Body of pancreas (tissue), 4 donors: ENCODE measurements at regions of chr10 and their contacts with region 1.

Region 1: GRCh38 chr10:69786791-69787190 is 14.9 kb upstream of the COL13A1 start:
- DNase-seq: no peak
- ATAC-seq: no peak
- H3K4me3 ChIP-seq: no peak overlapping the region
- H3K27ac ChIP-seq: no peak overlapping the region
- H3K4me1 ChIP-seq: no peaks in the 10 kb centered on the region
- H3K27me3 ChIP-seq: no peaks in the 10 kb centered on the region
- CTCF ChIP-seq: peak in 2 of 7 experiments; percentile 13 to 22
- POLR2A ChIP-seq: no peak

Region 2: DNA sequence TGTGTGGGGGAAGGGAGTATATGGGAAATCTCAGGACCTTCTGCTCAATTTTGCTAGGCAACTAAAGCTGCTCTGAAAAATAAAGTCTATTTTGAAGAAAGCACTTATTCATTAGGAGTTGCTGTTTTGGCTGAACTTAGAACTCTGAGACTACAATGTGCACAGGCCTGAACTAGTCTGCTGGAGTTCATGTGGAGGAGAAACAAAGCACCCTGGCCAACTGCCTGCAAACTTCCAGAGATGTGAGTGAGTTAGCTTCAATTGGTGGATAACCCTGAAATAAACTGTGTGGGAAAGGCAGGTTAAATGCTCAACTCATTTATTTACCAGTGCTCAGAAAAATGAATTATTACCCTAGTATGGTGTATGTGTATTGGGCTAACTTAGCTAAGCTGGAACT is 174.0 kb before region 1 on chr10:
- intact Hi-C with region 1: no loop called
- DNase-seq: no peak
- ATAC-seq: no peak
- H3K4me3 ChIP-seq: no peak overlapping the region
- H3K27ac ChIP-seq: no peak overlapping the region
- H3K4me1 ChIP-seq: no peaks in the 10 kb centered on the region
- H3K27me3 ChIP-seq: no peaks in the 10 kb centered on the region
- CTCF ChIP-seq: no peak
- POLR2A ChIP-seq: no peak

Region 3: DNA sequence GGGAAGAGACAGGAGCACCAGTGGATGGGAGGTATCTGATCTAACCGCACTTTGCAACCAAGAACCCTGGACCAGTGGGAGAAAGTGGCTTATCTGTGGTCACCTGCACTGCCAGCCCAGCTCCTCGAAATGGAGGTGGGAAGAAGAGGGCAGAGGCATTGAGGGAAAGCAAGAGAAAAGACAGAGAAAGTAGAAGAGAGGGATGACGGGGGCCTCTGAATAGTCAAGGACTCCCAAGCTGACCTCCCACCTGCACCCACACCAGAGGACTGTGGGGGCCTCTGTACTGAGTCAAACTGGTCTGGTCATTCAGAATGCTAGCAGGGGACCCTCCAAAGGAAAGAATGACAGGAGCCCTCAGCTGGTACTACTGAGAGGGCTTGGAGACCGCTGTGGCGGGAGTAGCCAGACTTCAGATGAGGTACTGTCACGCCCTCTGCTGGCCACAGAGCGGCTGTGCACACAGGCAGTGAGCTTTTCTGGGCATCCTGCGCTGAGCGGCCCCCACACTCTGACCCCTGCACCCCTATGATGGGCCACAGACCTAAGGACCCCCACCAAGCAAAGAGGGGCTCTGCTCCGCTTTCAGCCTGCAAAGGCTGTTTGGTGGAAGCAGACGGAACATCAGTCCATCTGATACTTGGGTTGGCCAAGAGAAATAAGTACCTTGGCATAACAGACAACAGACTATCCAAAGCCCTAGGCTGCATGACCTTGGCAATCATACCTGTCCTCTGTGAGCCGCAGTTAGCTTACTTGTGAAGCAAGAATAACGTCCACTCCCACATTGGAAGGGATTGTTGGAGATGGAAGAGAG is 127.8 kb after region 1 on chr10:
- intact Hi-C with region 1: loop called (anchors 10 kb)
- DNase-seq: peak; percentile 70 to 75 (median 72)
- ATAC-seq: peak; percentile 73
- H3K4me3 ChIP-seq: no peak overlapping the region
- H3K27ac ChIP-seq: no peak overlapping the region
- H3K4me1 ChIP-seq: peaks cover 6% of the 10 kb centered on the region
- H3K27me3 ChIP-seq: no peaks in the 10 kb centered on the region
- CTCF ChIP-seq: peak; percentile 65 to 89 (median 80)
- POLR2A ChIP-seq: no peak

Region 4: GRCh38 chr10:69938541-69938991 is 151.8 kb after region 1 on chr10:
- intact Hi-C with region 1: no loop called
- DNase-seq: peak in 2 of 4 donors; percentile 18 to 28
- ATAC-seq: peak; percentile 21
- H3K4me3 ChIP-seq: no peak overlapping the region
- H3K27ac ChIP-seq: no peak overlapping the region
- H3K4me1 ChIP-seq: peaks cover 4% of the 10 kb centered on the region
- H3K27me3 ChIP-seq: no peaks in the 10 kb centered on the region
- CTCF ChIP-seq: no peak
- POLR2A ChIP-seq: no peak